ENCODE measurements at regions of chr15 and their contacts with region 1.

Region 1: DNA sequence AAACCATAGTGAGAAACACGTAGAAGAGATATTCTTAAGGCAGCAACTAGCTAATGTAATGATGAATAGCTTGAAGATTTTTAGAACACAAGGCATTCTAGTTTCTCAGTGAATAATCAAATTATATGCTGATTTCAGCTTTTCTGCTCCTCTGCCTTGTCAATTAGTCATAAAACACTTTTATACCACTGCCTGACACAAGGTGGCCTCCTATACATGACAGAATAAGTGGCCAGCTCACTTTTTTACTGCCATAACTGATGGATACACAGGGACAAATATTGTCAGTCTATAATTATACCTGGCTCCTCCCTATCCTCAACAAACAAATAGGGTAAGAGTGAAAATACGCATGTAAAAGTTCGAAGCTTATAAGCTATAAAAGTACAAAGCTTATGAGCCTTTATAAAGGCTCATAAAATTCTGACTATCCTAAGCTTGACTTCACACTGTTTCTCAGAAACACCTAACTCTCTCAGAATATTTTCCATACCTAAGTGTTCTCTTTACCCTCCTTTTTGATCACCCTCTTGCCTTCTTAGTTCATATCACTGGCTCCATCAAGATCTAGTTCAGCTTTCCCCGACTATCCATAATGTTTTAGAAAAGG is 81.6 kb downstream of the HERC1 start:
- DNase-seq: peak; percentile 73
- H3K4me3 ChIP-seq: no peak overlapping the region
- H3K27ac ChIP-seq: no peak overlapping the region
- H3K4me1 ChIP-seq: no peaks in the 10 kb centered on the region
- CTCF ChIP-seq: peak; percentile 93

Region 2: GRCh38 chr15:63381301-63382204 is 370.6 kb before region 1 on chr15 and contains the start of gene CA12:
- CTCF ChIA-PET with region 1: no interaction called
- POLR2A ChIA-PET with region 1: no interaction called
- intact Hi-C with region 1: no loop called
- DNase-seq: no peak
- H3K4me3 ChIP-seq: no peak within 1 kb of the TSS
- H3K27ac ChIP-seq: no peak within 1 kb of the TSS
- H3K4me1 ChIP-seq: no peaks in the 10 kb centered on the region
- CTCF ChIP-seq: no peak
- total RNA-seq, gene CA12: not detected in 2 replicates

Region 3: GRCh38 chr15:63610200-63610841 is 141.9 kb before region 1 on chr15:
- CTCF ChIA-PET with region 1: interaction called, 6 read pairs
- POLR2A ChIA-PET with region 1: no interaction called
- intact Hi-C with region 1: loop called (anchors 10 kb)
- DNase-seq: peak; percentile 88
- H3K4me3 ChIP-seq: no peak overlapping the region
- H3K27ac ChIP-seq: peak overlapping the region; percentile 52
- H3K4me1 ChIP-seq: peaks cover 19% of the 10 kb centered on the region
- CTCF ChIP-seq: peak; percentile 95

Region 4: GRCh38 chr15:63891079-63891767 is 139.0 kb after region 1 on chr15:
- CTCF ChIA-PET with region 1: interaction called, 3 read pairs
- POLR2A ChIA-PET with region 1: interaction called, 3 read pairs
- intact Hi-C with region 1: loop called (anchors 1 kb)
- DNase-seq: peak; percentile 75
- H3K4me3 ChIP-seq: no peak overlapping the region
- H3K27ac ChIP-seq: no peak overlapping the region
- H3K4me1 ChIP-seq: peaks cover 20% of the 10 kb centered on the region
- CTCF ChIP-seq: peak; percentile 99

Region 5: DNA sequence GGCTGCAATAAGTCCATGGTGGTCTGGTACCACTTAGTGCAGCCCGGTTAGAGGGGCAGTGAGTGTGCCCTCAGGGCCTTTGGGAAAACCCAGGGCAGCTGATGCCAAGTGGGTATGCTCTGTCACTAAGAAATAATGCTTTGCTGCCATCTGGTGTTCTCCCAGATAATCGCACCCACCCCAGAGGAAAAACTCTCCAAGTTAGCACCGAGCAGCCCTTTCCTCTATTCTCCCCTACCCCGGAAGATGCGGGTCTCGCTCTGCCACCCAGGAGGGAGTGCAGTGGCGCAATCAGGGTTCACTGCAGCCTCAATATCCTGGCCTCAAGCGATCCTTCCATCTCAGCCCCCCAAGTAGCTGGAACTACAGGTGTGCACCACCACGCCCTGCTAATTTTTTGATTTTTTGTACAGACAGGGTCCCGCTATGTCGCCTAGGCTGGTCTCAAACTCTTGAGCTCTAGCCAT is 315.4 kb after region 1 on chr15:
- CTCF ChIA-PET with region 1: interaction called, 8 read pairs
- POLR2A ChIA-PET with region 1: interaction called, 4 read pairs
- intact Hi-C with region 1: loop called (anchors 1 kb)
- DNase-seq: peak; percentile 81
- H3K4me3 ChIP-seq: peak overlapping the region; percentile 9
- H3K27ac ChIP-seq: no peak overlapping the region
- H3K4me1 ChIP-seq: peaks cover 17% of the 10 kb centered on the region
- CTCF ChIP-seq: peak; percentile 87

Region 6: DNA sequence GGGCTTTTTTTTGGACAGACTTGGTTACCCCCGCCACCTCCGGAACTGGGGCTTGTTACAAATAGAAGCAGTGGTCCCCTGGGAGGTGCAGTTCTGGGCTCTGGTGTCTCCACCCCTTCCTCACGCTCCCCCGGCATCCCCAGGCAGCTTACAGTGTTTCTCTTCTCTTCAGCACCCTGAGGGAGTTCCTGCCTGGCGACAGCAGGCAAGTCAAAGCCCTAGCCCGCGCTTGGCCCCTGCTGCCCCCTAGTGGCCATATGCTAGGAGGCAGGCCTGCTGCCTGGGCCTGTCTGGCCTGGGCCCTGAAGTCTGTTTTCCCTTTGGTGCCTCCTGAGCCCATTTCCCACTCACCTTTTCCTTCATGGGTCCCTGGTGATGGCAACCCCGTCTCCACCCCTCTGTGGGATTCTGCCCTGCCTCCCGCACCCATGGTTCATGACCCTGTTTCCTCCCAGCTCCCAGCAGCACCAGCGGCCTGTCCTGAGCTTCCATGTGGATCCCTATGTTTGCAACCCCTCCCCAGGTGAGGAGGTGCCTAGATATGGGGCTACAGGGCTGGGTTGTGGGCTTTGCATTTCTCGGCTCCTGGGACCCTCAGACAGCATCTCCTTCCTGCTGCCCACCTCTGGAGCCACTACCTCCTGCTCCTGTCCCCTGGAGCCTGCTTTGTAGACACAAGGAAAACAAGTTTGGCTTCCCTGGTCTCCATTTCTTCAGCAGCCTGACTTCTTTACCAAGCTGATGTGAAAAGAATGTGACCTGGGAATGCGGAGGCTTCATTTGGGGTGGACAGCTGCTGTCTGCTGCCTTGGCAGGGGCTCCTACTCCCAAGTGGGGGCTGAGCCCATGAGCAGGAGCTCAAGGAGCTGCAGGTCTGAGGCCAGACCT is 401.5 kb after region 1 on chr15:
- CTCF ChIA-PET with region 1: no interaction called
- POLR2A ChIA-PET with region 1: interaction called, 5 read pairs
- intact Hi-C with region 1: loop called (anchors 2 kb)
- DNase-seq: peak; percentile 98
- H3K4me3 ChIP-seq: peak overlapping the region; percentile 90
- H3K27ac ChIP-seq: peak overlapping the region; percentile 93
- H3K4me1 ChIP-seq: peaks cover 46% of the 10 kb centered on the region
- CTCF ChIP-seq: peak; percentile 97